Heart right ventricle (tissue), 16 donors: ENCODE measurements at regions of chr7 and their contacts with region 1.

Region 1: DNA sequence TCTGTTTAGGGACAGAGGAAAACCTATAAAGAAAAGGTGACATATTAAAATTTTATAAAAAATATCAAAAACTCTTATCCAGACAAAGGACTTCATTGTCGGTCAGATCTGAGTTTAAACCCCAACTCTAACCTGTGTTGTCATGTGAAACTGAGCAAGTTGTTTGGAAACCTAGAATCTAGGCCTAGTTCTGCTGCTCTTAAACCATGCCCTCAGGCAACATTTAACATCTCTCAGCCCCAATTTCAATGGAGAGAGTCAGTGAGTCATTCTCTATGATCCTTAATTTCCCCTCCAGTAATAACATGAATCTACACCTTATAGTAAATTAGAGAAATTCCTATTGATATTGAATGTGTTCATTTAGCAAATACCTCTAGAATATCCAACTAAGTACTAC is 192.3 kb downstream of the IMMP2L start:
- DNase-seq: no peak
- ATAC-seq: no peak
- H3K4me3 ChIP-seq: no peak overlapping the region
- H3K27ac ChIP-seq: no peak overlapping the region
- H3K4me1 ChIP-seq: no peaks in the 10 kb centered on the region
- H3K27me3 ChIP-seq: no peaks in the 10 kb centered on the region
- CTCF ChIP-seq: no peak

Region 2: DNA sequence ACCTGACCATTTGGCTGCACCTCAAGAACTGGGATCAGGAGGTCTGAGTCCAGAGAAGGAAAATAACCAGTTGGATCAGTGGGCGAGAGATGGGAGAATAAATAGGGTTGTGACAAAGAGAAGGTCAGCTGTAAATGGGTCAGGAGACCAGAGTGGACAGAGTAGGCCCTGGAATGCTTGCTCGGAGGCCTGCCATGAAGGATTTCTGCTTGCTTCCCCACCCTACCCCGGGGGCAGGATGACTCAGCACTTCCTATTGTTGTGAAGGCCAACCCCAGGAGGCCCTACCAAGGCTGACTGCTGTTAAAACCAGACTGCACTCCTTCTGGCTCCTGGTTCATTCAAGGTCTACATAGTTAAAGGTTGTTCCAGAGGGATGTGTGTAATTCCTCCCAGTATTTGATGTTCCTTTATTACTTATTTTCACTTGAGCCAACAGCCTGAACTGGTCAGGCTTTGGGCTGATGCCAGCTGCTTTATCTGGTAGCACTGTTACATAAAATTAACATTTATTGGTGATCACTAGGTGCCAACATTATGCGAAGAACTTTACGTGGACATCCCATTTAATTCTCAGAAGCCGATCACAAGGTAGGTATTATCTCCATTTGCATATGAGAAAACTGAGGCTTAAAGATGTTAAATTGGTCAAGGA is 1053.0 kb after region 1 on chr7:
- intact Hi-C with region 1: loop called in 1 of 10 experiments (anchors 10 kb)
- DNase-seq: peak; percentile 55 to 63
- ATAC-seq: peak; percentile 89 to 97 (median 93)
- H3K4me3 ChIP-seq: no peak overlapping the region
- H3K27ac ChIP-seq: peak overlapping the region in 4 of 10 donors; percentile 0 to 49 (median 30)
- H3K4me1 ChIP-seq: peaks cover 0 to 23% (median 12%) of the 10 kb centered on the region in 9 donors
- H3K27me3 ChIP-seq: no peaks in the 10 kb centered on the region
- CTCF ChIP-seq: no peak